ENCODE measurements at regions of chr5 and their contacts with region 1.

Region 1: DNA sequence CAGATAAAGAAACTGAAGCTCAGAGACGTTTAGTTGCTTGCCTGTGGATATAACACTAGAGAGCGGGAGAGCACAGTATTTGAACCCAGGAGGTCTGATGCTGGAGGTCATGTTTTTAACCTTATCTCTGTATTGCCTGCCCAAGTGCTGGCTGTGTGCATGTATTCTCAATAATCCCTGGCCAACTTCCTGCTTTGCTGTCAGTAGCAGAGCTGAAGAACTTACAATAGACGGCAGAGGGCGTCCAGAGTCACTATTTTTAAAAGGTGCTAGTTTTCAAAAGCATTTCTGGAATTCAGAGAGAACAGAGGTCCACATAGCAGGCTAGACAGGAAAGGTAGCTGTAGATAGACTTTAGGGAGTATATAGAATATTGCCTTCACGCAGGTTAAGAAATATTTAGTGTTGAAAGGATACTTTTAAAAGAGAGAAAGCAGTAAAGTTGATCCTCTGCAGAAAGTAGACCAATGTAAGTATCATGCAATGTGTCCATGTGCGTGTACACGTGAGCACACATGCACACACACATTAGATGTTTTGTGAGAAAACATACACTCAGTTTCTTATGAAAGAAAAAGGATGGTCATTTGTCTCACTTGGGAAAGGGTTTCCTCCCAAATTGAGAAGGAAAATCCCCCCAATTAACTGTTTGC is 46.3 kb downstream of the PTCD2 start:
- DNase-seq: peak; percentile 37
- H3K4me3 Mint-ChIP-seq: no peak overlapping the region
- H3K27ac Mint-ChIP-seq: no peak overlapping the region
- H3K4me1 Mint-ChIP-seq: no peaks in the 10 kb centered on the region
- H3K27me3 Mint-ChIP-seq: no peaks in the 10 kb centered on the region

Region 2: GRCh38 chr5:71905834-71906711 is 460.4 kb before region 1 on chr5:
- CTCF ChIA-PET with region 1: no interaction called
- POLR2A ChIA-PET with region 1: no interaction called
- DNase-seq: no peak
- H3K4me3 Mint-ChIP-seq: no peak overlapping the region
- H3K27ac Mint-ChIP-seq: no peak overlapping the region
- H3K4me1 Mint-ChIP-seq: no peaks in the 10 kb centered on the region
- H3K27me3 Mint-ChIP-seq: peaks cover 6% of the 10 kb centered on the region

Region 3: DNA sequence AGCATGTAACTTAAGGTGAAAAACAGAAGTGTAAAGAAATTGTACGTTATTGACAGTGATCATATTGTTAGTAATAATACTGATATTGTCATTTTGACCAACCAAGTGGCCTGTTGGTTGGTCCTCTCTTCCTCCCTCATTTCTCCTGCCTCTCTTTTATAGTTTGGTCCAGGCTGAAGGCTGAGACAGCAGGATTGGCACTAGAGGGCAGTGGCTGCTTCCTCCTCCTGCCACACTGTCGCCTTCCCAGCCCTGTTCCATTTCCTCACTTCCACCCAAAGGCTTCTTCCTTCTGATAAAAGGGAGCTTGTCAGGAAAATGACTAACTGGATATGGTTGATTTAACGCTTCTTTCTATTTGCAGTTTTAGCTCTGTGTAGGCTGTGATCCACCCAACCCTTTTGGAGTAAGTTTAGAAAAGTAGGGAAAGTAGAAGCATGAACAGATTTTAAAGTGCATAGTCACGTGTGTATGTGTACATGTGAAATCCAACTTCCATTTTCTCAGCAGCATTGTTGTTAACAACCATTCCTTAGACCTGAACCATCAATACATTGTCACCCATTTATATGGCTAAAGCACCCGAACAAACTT is 10.6 kb before region 1 on chr5:
- CTCF ChIA-PET with region 1: interaction called, 11 read pairs
- POLR2A ChIA-PET with region 1: no interaction called
- DNase-seq: no peak
- H3K4me3 Mint-ChIP-seq: no peak overlapping the region
- H3K27ac Mint-ChIP-seq: no peak overlapping the region
- H3K4me1 Mint-ChIP-seq: no peaks in the 10 kb centered on the region
- H3K27me3 Mint-ChIP-seq: no peaks in the 10 kb centered on the region

Region 4: GRCh38 chr5:72378636-72379290 is 12.3 kb after region 1 on chr5:
- CTCF ChIA-PET with region 1: no interaction called
- POLR2A ChIA-PET with region 1: no interaction called
- DNase-seq: no peak
- H3K4me3 Mint-ChIP-seq: no peak overlapping the region
- H3K27ac Mint-ChIP-seq: no peak overlapping the region
- H3K4me1 Mint-ChIP-seq: no peaks in the 10 kb centered on the region
- H3K27me3 Mint-ChIP-seq: peaks cover 8% of the 10 kb centered on the region